Mammary epithelial cell (primary cell): ENCODE measurements at regions of chr5 and their contacts with region 1.

Region 1: GRCh38 chr5:96344678-96345577 is 88.1 kb downstream of the PCSK1 start:
- DNase-seq: peak; percentile 49
- H3K4me3 ChIP-seq: no peak overlapping the region
- H3K27ac ChIP-seq: no peak overlapping the region
- H3K4me1 ChIP-seq: no peaks in the 10 kb centered on the region
- H3K27me3 ChIP-seq: no peaks in the 10 kb centered on the region
- CTCF ChIP-seq: peak; percentile 51 to 63

Region 2: GRCh38 chr5:96381526-96381925 is 36.6 kb after region 1 on chr5:
- CTCF ChIA-PET with region 1: no interaction called
- dilution Hi-C with region 1: no loop called
- in situ Hi-C with region 1: no loop called
- intact Hi-C with region 1: no loop called
- DNase-seq: no peak
- H3K4me3 ChIP-seq: no peak overlapping the region
- H3K27ac ChIP-seq: no peak overlapping the region
- H3K4me1 ChIP-seq: peaks cover 14% of the 10 kb centered on the region
- H3K27me3 ChIP-seq: no peaks in the 10 kb centered on the region
- CTCF ChIP-seq: no peak

Region 3: GRCh38 chr5:96601811-96602244 is 256.9 kb after region 1 on chr5:
- CTCF ChIA-PET with region 1: interaction called, 3 read pairs
- dilution Hi-C with region 1: no loop called
- in situ Hi-C with region 1: loop called (anchors 5 kb)
- intact Hi-C with region 1: loop called (anchors 1 kb)
- DNase-seq: peak; percentile 55
- H3K4me3 ChIP-seq: no peak overlapping the region
- H3K27ac ChIP-seq: no peak overlapping the region
- H3K4me1 ChIP-seq: no peaks in the 10 kb centered on the region
- H3K27me3 ChIP-seq: peaks cover 5% of the 10 kb centered on the region
- CTCF ChIP-seq: peak; percentile 77 to 87

Region 4: DNA sequence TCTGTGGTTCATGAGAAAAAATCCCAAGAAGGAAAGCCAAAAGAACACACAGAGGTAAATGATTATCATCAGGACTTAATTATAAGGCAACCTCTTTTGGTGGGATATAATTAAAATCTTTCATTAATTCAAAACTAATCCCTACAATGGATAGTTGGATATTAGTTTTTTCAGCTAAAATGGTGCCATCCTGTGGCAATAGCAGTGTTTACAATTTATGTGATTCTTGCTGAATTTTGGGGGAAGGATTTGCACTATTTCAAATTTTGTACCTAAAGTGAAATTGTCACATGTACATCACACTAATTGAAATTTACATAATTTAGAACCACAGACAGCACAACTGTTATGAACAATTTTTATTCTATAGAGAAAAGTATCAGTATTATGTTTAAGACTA is 384.2 kb after region 1 on chr5:
- CTCF ChIA-PET with region 1: no interaction called
- dilution Hi-C with region 1: no loop called
- in situ Hi-C with region 1: no loop called
- intact Hi-C with region 1: loop called (anchors 10 kb)
- DNase-seq: no peak
- H3K4me3 ChIP-seq: no peak overlapping the region
- H3K27ac ChIP-seq: no peak overlapping the region
- H3K4me1 ChIP-seq: peaks cover 14% of the 10 kb centered on the region
- H3K27me3 ChIP-seq: no peaks in the 10 kb centered on the region
- CTCF ChIP-seq: peak; percentile 15 to 34

Region 5: GRCh38 chr5:97192580-97193358 is 847.8 kb after region 1 on chr5:
- CTCF ChIA-PET with region 1: no interaction called
- dilution Hi-C with region 1: no loop called
- in situ Hi-C with region 1: no loop called
- intact Hi-C with region 1: no loop called
- DNase-seq: peak; percentile 84
- H3K4me3 ChIP-seq: no peak overlapping the region
- H3K27ac ChIP-seq: no peak overlapping the region
- H3K4me1 ChIP-seq: peaks cover 12% of the 10 kb centered on the region
- H3K27me3 ChIP-seq: no peaks in the 10 kb centered on the region
- CTCF ChIP-seq: no peak